ENCODE measurements at regions of chr2 and their contacts with region 1.

Region 1: DNA sequence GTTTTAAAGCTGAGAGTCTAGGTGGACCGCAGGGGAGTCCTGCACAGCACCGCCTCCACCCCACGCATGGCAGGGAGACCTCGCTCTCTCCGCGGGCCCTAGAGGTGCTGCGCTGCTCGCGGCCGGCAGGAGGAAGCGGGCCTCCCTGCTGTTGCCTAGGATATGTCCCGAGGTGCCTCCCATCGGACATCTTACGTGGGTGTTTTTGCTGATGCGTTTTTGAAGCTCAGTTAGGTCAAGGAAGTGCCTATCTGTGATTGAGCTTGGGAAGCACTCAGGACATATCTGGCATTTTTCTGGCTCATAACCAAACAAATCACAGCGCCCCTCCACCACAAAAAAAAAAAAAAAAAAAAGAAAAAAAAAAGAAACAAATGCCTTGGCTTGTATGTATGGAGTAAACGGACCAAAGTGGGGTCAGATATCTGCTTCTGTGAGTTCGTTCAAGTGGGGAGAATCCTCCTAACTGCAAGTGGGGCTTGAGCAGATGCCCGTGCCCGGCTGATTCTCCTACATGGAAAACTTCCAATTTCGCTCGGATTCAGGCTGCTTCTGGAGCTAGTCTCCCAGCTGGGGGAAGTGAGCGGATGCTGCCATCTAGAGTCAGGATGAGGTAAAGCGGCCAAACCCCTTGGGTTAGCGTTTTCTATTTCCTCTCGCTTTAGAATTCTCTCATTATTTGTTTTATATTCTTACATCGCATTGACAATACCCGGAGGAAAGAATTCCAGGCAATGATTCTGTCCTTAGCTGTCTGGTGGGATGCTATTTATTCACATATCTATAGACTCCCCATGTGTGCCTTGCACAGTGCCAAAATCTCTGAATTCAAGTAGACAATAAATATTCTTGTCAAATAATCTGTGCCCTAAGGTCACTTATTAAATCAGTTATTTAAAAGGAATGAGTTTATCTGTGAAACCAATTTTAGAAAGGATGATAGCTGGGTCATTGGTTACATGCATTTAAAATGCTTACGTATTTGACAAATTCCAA is 95.3 kb downstream of the CD8B2 start:
- DNase-seq: peak in 1 of 2 donors; percentile 84
- H3K4me3 ChIP-seq: peak overlapping the region; percentile 37 to 51
- H3K27ac ChIP-seq: no peak overlapping the region
- H3K4me1 ChIP-seq: peaks cover 0 to 4% of the 10 kb centered on the region in 2 donors
- H3K27me3 ChIP-seq: peaks cover 6% of the 10 kb centered on the region
- CTCF ChIP-seq: peak; percentile 15 to 78 (median 78)

Region 2: DNA sequence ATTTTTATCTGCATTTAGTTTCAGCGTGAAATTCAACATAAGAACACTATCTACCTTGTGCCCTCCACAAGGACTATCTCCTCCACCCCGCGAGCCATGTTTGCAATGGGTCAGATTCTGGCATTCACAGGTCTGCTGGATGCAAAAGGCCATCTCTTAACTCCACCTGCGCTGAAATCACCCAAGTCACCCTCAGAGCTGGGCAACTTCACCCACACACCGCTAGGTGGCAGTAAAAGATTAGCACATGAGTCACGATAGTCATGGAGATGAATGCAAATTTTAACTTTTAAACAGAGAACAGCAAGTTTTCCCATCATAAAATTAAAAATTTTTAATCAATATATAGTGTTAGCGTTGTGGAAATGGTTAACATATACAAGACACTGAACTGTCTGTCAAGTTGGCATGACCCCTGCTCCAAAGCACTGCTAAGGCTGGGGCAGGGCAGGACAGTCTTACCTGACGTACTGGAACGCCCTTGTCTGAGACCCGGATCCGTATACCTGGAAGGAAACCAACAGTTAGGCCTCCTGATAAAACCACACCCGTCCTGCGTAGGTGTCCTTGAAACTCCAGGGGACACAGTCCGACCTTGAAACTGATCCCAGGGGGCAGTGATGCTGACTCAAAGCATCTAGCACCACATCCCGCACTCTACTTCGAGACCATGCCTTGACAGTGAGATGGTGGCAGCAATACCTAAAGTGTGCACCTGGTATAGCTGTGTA is 477.9 kb before region 1 on chr2:
- intact Hi-C with region 1: loop called (anchors 1 kb)
- DNase-seq: peak in 1 of 2 donors; percentile 81
- H3K4me3 ChIP-seq: no peak overlapping the region
- H3K27ac ChIP-seq: no peak overlapping the region
- H3K4me1 ChIP-seq: peaks cover 0 to 3% of the 10 kb centered on the region in 2 donors
- H3K27me3 ChIP-seq: no peaks in the 10 kb centered on the region
- CTCF ChIP-seq: peak; percentile 74 to 99 (median 93)

Region 3: GRCh38 chr2:106542811-106543259 is 39.6 kb before region 1 on chr2:
- intact Hi-C with region 1: loop called (anchors 2 kb)
- DNase-seq: peak in 1 of 2 donors; percentile 77
- H3K4me3 ChIP-seq: peak overlapping the region in 1 of 2 donors; percentile 39
- H3K27ac ChIP-seq: no peak overlapping the region
- H3K4me1 ChIP-seq: no peaks in the 10 kb centered on the region
- H3K27me3 ChIP-seq: no peaks in the 10 kb centered on the region
- CTCF ChIP-seq: peak; percentile 62 to 96 (median 95)

Region 4: GRCh38 chr2:106664669-106665068 is 82.2 kb after region 1 on chr2:
- intact Hi-C with region 1: no loop called
- DNase-seq: no peak
- H3K4me3 ChIP-seq: no peak overlapping the region
- H3K27ac ChIP-seq: no peak overlapping the region
- H3K4me1 ChIP-seq: no peaks in the 10 kb centered on the region
- H3K27me3 ChIP-seq: no peaks in the 10 kb centered on the region
- CTCF ChIP-seq: no peak

Measured in ascending aorta (tissue), 2 donors.